Common myeloid progenitor, CD34-positive (primary cell): ENCODE measurements at regions of chr14 and their contacts with region 1.

Region 1: GRCh38 chr14:24431569-24432258 is 2.0 kb downstream of the KHNYN start:
- DNase-seq: peak; percentile 94 to 96 (median 95)
- H3K4me3 ChIP-seq: peak overlapping the region in 3 of 7 experiments; percentile 81 to 93 (median 89)
- H3K27ac ChIP-seq: no peak overlapping the region
- H3K4me1 ChIP-seq: peaks cover 12 to 68% (median 66%) of the 10 kb centered on the region in 4 experiments
- H3K27me3 ChIP-seq: no peaks in the 10 kb centered on the region

Region 2: GRCh38 chr14:24332268-24332993 is 99.3 kb before region 1 on chr14:
- CTCF ChIA-PET with region 1: interaction called, 488 read pairs
- POLR2A ChIA-PET with region 1: interaction called, 8 read pairs
- DNase-seq: peak; percentile 89 to 95 (median 94)
- H3K4me3 ChIP-seq: peak overlapping the region in 6 of 7 experiments; percentile 19 to 63 (median 30)
- H3K27ac ChIP-seq: no peak overlapping the region
- H3K4me1 ChIP-seq: peaks cover 15 to 71% (median 68%) of the 10 kb centered on the region in 4 experiments
- H3K27me3 ChIP-seq: peaks cover 0 to 34% (median 10%) of the 10 kb centered on the region in 5 experiments

Region 3: DNA sequence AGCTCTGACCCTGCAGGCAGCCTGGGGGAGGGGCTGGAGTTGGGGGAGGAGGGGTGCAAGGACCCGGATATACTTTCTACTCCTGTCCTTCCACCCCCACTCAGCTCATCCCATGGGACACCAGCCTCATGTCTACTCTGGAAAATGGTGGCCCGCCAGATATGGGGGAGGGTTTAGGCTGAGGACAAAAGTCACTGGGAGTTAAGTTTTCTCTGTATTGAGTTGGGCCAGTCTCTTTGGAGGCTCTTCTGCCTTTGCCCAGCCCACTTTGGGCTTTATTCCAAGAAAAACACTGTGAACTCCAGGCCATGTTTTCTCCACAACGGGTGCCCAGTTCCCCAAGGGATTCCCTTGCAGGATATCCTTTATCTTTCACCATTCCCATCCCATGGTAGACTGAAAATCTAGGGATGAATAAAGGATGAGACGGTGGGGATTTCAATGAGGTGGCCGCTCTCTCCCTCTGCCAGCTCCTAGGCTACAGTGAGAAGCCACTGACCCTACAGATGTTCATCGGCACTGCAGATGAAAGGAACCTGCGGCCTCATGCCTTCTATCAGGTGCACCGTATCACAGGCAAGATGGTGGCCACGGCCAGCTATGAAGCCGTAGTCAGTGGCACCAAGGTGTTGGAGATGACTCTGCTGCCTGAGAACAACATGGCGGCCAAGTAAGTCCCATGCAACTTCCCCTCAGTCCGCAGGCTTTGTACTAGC is 58.9 kb before region 1 on chr14:
- CTCF ChIA-PET with region 1: interaction called, 21 read pairs
- POLR2A ChIA-PET with region 1: interaction called, 3 read pairs
- DNase-seq: no peak
- H3K4me3 ChIP-seq: no peak overlapping the region
- H3K27ac ChIP-seq: no peak overlapping the region
- H3K4me1 ChIP-seq: peaks cover 0 to 31% (median 23%) of the 10 kb centered on the region in 4 experiments
- H3K27me3 ChIP-seq: peaks cover 0 to 4% (median 0%) of the 10 kb centered on the region in 5 experiments

Region 4: DNA sequence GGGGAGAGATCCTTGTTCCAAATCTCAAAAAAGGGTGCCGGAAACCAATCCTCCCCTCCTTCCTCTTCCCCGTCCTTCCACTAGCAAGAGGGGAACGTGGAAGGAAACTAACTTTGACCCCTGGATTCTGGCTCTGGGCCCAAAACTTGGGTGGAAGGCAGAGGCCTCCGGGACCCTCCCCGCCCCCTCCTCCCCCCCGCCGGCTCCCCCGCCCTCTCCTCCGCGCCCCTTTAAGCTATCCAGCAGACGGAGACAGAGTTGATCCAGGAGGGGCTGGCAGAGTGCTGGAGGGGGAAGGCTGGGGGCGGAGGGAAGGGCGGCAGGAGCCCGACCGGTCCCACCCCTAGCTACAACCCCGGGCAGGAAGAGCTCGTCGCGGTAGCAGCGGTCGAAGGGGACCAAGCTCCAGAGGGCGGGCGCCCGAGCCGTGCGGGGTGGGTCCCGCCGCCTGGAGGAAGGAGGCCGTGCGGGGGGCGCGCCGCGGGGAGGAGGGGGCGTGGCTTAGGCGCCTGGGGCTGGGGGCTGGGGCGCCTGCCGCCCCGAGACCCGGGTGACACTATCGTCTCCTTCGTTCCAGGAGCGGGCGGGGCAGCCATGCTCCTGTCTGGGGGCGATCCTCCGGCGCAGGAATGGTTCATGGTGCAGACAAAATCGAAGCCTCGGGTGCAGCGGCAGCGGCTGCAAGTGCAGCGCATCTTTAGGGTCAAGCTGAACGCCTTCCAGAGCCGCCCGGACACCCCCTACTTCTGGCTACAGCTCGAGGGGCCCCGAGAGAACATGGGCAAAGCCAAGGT is 32.9 kb before region 1 on chr14 and contains the start of gene NYNRIN:
- CTCF ChIA-PET with region 1: interaction called, 489 read pairs
- POLR2A ChIA-PET with region 1: interaction called, 6 read pairs
- DNase-seq: peak; percentile 45 to 82 (median 76)
- H3K4me3 ChIP-seq: peak within 1 kb of the TSS; percentile 42 to 84 (median 68)
- H3K27ac ChIP-seq: peak within 1 kb of the TSS in 1 of 2 experiments; percentile 20
- H3K4me1 ChIP-seq: peaks cover 12 to 75% (median 58%) of the 10 kb centered on the region in 4 experiments
- H3K27me3 ChIP-seq: no peaks in the 10 kb centered on the region

Region 5: DNA sequence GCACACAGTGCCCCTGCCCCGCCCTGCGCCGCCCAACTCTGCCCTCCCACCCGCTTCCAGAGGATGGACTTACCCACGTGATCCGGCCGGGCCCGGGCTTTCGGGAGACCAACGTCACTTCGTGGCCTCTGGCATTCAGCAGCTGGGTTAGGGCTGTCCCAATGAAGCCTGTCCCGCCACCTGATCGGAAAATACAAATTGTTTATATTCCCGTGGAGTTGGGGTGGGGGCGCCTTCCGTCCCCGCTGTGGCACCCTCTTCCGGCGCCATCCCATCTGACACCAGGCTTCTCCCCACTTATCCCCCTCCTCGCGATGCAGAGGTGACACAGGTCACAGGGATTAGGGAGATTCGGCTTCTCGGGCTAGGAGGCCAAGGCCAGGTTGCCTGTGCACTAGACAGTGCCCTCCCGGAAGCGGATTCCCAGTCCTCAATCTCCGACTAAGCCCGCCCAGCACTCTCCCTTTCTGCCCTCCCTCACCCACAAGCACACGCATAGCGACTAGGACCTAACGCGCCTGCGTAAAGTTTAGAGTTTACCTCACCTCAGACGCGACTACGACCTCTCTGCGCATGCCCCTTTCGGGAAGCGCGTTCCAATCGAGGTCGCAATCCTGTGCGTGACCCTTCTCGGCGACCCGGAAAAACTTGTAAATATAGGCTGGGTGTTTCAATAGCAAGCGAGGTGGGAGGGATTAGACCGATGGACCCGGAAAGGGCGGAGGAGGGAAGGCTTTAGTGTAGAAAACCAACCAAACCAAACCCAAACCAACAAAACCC is 10.7 kb after region 1 on chr14 and contains the start of gene SDR39U1:
- CTCF ChIA-PET with region 1: interaction called, 32 read pairs
- POLR2A ChIA-PET with region 1: no interaction called
- DNase-seq: peak; percentile 99 to 100 (median 99)
- H3K4me3 ChIP-seq: peak within 1 kb of the TSS; percentile 60 to 96 (median 83)
- H3K27ac ChIP-seq: peak within 1 kb of the TSS; percentile 92 to 97
- H3K4me1 ChIP-seq: peaks cover 6 to 38% (median 31%) of the 10 kb centered on the region in 4 experiments
- H3K27me3 ChIP-seq: no peaks in the 10 kb centered on the region

Region 6: DNA sequence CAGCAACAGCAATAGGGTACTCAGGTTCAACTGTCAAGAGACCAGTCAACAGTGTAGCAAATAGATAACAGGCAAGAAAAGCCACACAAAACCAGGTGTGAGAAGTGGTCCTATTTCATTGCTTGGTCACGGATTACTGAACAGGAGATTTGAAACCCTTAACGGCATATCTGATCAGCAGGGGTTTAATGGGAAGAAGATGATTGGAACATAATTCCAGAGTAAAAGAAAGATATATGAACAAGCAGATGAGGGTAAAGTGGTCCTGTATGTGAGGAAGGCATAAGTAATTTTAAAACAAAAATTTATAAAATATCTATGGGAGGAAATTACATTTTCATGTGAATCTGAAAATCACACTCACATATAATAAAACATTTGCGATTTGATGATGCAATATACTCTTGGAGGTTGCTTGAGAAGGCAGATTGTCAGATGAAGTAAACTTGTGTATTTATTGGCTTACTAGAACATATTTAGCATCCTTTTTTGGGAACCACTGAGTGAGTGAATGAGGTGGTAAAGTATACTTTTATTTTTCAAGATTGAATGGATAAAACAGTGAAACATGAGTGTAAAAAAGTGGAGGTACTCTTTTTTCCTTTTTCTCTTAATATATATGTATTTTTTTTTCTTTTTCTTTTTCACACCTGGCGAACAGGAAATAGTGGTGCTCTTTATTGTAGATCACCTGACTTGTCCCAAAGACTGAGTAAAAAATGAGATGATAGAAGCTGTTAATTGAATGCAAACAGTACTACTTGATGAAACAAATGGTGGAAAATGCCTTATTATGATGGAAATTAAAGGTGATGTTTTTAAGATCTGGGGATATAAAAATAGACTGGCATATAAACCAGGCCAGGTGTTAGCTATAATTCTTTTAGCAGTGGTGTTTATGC is 32.4 kb after region 1 on chr14:
- CTCF ChIA-PET with region 1: no interaction called
- POLR2A ChIA-PET with region 1: no interaction called
- DNase-seq: no peak
- H3K4me3 ChIP-seq: no peak overlapping the region
- H3K27ac ChIP-seq: no peak overlapping the region
- H3K4me1 ChIP-seq: no peaks in the 10 kb centered on the region
- H3K27me3 ChIP-seq: no peaks in the 10 kb centered on the region